GM10248 (cell line): ENCODE measurements at regions of chr5 and their contacts with region 1.

Region 1: GRCh38 chr5:93607367-93608258 is 24.6 kb downstream of the NR2F1 start:
- DNase-seq: no peak
- CTCF ChIP-seq: peak; percentile 81

Region 2: DNA sequence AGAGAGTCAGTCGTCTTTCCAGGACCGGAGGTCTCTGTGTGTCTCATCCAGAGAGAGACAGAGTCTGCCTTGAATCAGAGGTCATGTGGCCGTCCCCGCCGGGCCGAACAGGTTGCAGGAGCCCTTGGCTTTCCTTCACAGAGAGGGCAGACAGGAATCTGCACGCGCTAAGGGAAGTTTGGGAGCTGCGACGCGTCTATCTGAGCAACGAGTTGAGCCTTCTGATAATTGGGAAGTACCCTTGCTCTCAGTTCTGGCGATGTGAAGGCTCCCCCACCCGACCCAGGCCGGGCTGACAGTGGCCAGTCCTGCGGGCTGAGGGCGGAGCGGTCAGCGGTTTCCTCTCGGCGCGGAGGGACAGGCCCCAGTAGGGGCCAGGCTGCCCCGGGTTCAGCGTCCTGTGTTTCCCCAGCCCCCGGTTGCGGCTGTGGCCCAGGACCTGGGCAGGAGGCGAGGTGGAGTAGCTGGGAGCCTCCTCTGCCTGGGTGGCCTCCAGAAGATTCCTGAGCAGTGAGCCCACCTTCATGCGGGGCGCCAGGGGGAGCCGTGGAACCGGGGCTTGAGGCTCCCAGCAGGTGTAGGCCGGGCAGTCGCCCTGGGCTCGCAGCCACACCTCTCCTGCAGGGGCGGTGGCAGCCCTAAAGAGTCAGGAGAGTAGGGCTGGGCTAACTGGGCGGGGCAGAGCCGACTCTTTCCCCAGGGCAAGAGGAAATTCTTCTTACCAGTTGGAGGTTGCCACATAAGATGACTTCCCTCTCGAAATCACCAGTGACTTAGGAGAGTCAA is 10.7 kb before region 1 on chr5:
- CTCF ChIA-PET with region 1: interaction called, 13 read pairs
- POLR2A ChIA-PET with region 1: no interaction called
- DNase-seq: no peak
- CTCF ChIP-seq: no peak

Region 3: DNA sequence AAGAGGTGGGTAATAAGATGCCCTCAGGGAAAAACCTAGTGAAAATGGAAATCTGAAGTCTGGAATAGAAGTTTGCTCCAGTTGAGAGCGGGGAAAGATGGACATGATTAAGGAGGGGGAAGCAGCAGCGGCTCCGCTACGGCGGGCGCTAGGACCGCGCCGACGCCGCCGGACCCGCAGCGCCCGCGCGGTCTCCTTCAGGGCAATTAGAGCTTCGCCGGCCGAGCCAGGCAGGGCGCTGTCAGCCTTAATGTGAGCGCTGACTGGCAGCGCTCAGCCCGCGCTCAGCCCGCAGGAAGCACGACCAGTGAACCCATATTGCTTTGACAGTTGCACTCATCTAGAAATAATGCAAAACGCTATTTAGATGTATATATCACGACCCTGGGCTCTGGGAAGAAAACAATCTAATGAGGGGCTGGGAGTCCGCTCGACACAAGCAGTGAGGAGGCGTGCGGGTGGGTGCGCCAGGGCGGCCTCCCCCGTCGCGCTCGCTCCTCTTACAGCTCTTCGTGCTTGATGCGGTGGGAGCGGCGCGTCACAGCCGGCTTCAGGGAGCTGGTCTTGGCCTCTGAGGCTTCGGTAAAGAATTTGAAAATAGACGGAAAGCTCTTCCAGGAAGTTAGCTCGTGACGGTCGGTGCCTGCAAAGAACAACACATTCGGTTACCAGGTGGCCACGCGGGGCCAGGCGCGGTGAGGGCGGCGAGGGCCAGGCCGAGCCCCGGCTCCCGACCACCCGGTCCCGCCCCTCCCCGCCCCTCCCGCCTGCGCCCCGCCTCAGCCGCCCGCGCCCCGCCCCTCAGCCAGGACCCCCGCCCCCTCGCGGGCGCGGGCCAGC is 13.1 kb after region 1 on chr5:
- CTCF ChIA-PET with region 1: interaction called, 33 read pairs
- POLR2A ChIA-PET with region 1: no interaction called
- DNase-seq: peak; percentile 78
- CTCF ChIP-seq: peak; percentile 3